Heart right ventricle (tissue), 16 donors: ENCODE measurements at regions of chr17 and their contacts with region 1.

Region 1: GRCh38 chr17:56125830-56126819 is 27.1 kb upstream of the ANKFN1 start:
- DNase-seq: no peak
- ATAC-seq: no peak
- H3K4me3 ChIP-seq: no peak overlapping the region
- H3K27ac ChIP-seq: no peak overlapping the region
- H3K4me1 ChIP-seq: no peaks in the 10 kb centered on the region
- H3K27me3 ChIP-seq: peaks cover 0 to 27% (median 10%) of the 10 kb centered on the region in 7 donors
- CTCF ChIP-seq: peak in 7 of 9 donors; percentile 31 to 56 (median 44)

Region 2: DNA sequence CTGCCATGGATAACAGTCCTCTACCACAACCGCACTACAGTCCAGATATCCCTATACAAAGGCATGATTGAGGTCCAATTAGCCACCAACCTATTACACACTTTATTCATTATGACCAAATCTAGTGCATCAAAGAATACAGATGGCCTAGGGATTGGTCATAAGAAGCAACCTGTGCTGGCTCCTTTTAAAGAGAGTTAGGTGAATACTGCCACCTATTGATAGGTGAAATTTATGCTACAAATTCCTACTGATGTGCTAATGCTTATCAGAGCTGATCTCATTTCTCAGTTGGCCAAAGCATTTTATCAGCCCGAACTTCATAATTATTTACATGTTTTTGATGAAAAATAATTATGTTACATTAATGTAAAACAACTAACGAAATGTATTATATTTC is 193.4 kb after region 1 on chr17:
- intact Hi-C with region 1: loop called in 2 of 10 experiments (anchors 5 to 10 kb)
- DNase-seq: no peak
- ATAC-seq: peak in 1 of 8 donors; percentile 41
- H3K4me3 ChIP-seq: no peak overlapping the region
- H3K27ac ChIP-seq: no peak overlapping the region
- H3K4me1 ChIP-seq: peaks cover 0 to 37% (median 0%) of the 10 kb centered on the region in 9 donors
- H3K27me3 ChIP-seq: peaks cover 0 to 29% (median 10%) of the 10 kb centered on the region in 7 donors
- CTCF ChIP-seq: peak in 8 of 9 donors; percentile 14 to 60 (median 53)

Region 3: GRCh38 chr17:56478836-56479447 is 352.8 kb after region 1 on chr17:
- intact Hi-C with region 1: loop called in 4 of 10 experiments (anchors 5 to 10 kb)
- DNase-seq: no peak
- ATAC-seq: no peak
- H3K4me3 ChIP-seq: no peak overlapping the region
- H3K27ac ChIP-seq: no peak overlapping the region
- H3K4me1 ChIP-seq: no peaks in the 10 kb centered on the region
- H3K27me3 ChIP-seq: peaks cover 0 to 29% (median 0%) of the 10 kb centered on the region in 7 donors
- CTCF ChIP-seq: peak in 7 of 9 donors; percentile 35 to 59 (median 45)

Region 4: DNA sequence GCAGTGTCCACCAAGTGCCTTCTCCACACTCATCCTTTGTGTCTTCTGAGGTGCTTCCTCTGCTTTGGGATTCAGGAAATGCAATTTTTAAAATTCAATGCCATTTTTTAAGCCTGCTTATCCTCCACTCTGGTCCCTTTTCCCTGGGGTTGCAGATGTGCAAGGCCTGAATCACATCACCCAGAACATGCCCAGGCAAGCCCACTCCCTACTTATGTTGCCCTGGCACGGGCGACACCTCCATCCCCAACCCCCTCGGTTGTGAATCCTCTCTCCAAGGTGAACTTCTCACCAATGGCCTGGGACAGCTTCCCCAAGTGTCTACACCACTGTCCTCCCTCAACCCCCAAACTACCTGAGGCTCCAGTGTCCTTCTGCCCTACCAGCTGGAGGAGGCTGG is 591.4 kb after region 1 on chr17:
- intact Hi-C with region 1: no loop called
- DNase-seq: no peak
- ATAC-seq: no peak
- H3K4me3 ChIP-seq: no peak overlapping the region
- H3K27ac ChIP-seq: no peak overlapping the region
- H3K4me1 ChIP-seq: peaks cover 0 to 4% (median 0%) of the 10 kb centered on the region in 9 donors
- H3K27me3 ChIP-seq: peaks cover 0 to 30% (median 6%) of the 10 kb centered on the region in 7 donors
- CTCF ChIP-seq: no peak